Motor neuron (in vitro differentiated cells): ENCODE measurements at regions of chr11 and their contacts with region 1.

Region 1: GRCh38 chr11:29432719-29433325 is 584.0 kb downstream of the KCNA4 start:
- ATAC-seq: peak in 1 of 8 experiments; percentile 18
- H3K4me3 ChIP-seq: no peak overlapping the region
- H3K27ac ChIP-seq: no peak overlapping the region
- H3K4me1 ChIP-seq: no peaks in the 10 kb centered on the region

Region 2: DNA sequence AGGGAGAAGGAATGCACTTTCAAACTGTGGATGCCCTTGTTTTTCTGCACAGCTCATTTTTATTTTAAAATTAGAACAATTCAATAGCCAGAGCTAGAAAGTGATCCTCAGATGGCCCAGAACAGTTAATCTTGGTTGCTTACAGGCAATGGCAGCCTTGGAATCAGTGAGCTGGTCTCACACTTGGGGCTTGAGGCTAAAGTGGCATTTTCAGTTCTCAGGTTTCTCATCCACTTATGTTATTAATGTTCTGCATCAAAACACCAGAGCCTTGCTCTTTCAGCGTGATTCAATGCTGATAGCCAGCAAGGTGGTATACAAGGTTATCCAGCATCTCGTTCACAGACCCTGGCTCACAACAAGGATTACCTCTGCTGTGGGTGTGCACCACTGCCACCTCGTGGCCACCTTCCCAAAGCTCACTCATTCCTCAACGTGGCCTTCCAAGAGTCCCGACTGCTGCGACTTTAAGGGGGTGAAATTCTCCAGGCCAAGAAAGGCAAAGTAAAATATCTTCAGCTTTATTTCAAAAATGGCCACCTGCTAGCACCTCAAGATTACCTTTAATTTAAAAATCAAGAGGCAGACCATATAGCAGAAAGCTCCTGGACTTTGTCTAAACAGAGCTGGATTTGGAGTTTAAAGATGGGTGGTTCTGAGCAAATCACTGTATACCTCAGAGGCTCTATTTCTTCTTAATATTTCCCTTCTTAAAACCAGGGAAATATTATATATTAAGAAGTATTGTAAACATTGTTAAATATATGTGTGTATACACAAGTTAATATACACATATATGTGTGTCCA is 763.8 kb after region 1 on chr11:
- in situ Hi-C with region 1: loop called in 2 of 9 experiments (anchors 25 kb)
- ATAC-seq: peak; percentile 66 to 96 (median 87)
- H3K4me3 ChIP-seq: no peak overlapping the region
- H3K27ac ChIP-seq: no peak overlapping the region
- H3K4me1 ChIP-seq: no peaks in the 10 kb centered on the region

Region 3: GRCh38 chr11:30282289-30282631 is 849.4 kb after region 1 on chr11:
- in situ Hi-C with region 1: loop called in 1 of 9 experiments (anchors 25 kb)
- ATAC-seq: no peak
- H3K4me3 ChIP-seq: no peak overlapping the region
- H3K27ac ChIP-seq: no peak overlapping the region
- H3K4me1 ChIP-seq: peaks cover 0 to 3% of the 10 kb centered on the region in 2 donors

Region 4: DNA sequence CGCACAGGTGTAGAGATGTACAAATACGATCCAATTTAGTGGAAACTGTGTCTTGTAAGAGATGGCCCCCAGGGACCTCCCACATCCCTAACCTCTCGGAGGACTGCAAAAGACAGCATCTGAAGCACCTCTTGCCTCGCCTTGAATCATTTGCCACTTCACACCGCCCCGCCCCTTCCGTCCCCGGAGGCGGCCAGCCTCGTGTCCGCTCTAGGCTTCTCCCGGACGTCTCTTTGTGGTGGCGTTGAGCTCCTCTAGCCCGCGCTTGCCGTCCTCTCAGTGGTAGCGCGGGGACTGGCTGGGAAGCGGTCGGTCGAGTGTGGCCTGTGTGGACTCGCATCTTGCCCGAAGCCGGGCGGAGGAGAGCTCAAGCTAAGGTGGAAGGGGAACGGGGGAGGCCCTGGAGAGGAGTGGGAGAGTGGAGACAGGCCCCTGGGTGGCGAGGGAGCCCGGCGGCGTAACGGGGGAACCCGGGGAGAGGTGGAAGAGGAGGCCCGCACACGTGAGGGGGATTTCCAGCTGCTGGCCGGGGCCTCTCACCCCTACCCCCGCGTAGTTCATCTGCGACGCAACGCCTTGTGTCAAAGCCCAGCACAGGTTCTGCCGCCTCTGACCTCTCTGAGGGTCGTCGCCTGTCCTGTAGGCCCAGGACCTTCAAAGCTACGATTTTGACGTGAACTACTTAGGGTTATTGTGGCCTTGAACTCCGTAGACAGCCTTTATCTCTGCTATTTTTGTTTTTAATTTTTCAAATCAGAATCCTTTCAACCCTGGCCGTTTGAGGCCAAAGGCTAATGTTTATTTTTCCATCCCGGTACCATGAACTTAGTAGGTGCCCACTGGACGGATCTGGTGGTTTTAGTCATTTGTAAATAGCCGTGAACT is 890.2 kb after region 1 on chr11 and contains the start of gene ARL14EP:
- in situ Hi-C with region 1: loop called in 1 of 9 experiments (anchors 25 kb)
- ATAC-seq: peak; percentile 98 to 99 (median 99)
- H3K4me3 ChIP-seq: peak within 1 kb of the TSS; percentile 52 to 95 (median 86)
- H3K27ac ChIP-seq: peak within 1 kb of the TSS; percentile 85 to 95
- H3K4me1 ChIP-seq: peaks cover 13 to 27% of the 10 kb centered on the region in 2 donors
- total RNA-seq, gene ARL14EP: 19.5 to 37.0 (median 24.7) TPM